Adrenal gland (tissue), 19 donors: ENCODE measurements at regions of chr10 and their contacts with region 1.

Region 1: DNA sequence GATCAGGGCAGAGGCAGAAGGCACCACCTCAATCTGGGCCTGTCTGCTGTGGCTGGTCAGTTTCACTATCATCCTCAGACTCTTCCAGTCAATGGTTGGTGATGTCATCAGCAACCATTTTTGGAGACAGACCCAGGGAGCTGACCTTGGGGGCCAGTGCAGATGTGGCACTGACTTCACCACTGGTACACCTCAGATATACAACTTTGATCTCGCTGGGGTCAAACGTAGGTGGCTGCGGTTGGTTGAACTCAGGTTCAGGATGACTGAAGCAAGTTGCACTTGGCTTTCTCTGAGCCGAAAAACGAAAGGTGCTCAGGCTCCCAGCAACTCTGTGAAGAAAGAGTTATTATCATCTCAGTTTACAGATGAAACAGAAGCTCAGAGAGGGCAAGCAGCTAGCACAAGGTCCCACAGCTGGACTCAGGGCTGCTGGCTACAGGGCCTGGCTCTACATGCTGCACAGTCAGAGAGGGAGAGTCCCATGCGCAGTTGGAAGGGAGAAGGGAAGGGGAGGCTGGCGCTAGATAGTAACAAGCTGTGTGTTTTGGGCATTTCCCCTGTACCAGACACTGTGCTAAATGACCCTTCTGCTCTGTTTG is 27.2 kb downstream of the ANKRD16 start:
- DNase-seq: peak in 4 of 7 donors; percentile 18 to 42 (median 26)
- H3K4me3 ChIP-seq: no peak overlapping the region
- H3K27ac ChIP-seq: peak overlapping the region in 2 of 5 donors; percentile 64 to 66
- H3K4me1 ChIP-seq: peaks cover 0 to 9% of the 10 kb centered on the region in 2 donors
- H3K27me3 ChIP-seq: no peaks in the 10 kb centered on the region
- CTCF ChIP-seq: no peak
- POLR2A ChIP-seq: no peak

Region 2: DNA sequence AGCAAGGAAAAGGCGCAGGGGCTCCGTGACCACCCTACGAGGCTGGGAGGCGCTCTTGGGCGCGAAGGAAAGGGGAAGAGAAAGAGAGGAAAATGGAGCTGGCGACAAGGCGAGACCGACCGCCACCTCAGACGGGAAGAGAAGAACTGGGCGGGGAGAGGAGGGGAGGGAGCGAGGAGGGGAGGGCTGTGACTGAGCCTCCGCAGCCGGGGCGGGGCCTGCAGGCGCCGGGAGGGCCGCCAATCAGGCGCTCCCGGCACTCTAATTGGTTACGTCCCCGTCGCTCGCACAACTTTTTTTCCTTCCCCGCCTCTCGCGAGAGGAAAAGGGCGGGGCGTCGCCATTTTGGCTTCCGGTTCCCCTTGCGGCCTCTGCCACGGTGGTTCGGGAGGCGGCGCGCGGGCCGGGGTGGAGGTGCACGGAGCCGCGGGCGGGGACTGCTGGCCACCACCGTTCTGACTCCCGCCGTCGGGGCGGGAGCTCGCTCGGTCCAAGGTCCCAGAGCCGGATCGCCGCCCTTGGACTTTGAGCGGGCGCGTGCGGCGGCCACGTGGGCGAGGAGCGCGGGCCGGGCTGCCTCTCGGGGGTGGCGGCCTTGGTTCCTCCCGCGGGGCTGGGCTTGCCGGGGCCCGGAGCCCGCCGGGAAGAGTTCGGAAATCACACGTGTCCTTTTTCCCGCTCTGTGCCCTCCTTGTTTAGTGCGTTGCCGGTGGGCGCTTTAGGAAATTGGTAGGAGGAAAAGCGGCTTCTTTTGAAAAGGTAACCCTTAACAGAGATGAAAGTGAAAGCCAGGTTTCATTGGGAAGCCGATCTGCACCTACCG is 49.0 kb before region 1 on chr10 and contains the start of gene GDI2:
- intact Hi-C with region 1: loop called in 1 of 2 experiments (anchors 10 kb)
- DNase-seq: peak; percentile 96 to 98 (median 97)
- H3K4me3 ChIP-seq: peak within 1 kb of the TSS; percentile 83 to 99 (median 98)
- H3K27ac ChIP-seq: peak within 1 kb of the TSS; percentile 94 to 99 (median 97)
- H3K4me1 ChIP-seq: peaks cover 23 to 49% of the 10 kb centered on the region in 2 donors
- H3K27me3 ChIP-seq: no peaks in the 10 kb centered on the region
- CTCF ChIP-seq: peak in 1 of 6 experiments; percentile 18
- POLR2A ChIP-seq: peak; percentile 84 to 97
- total RNA-seq, gene GDI2: 182 to 412 (median 239) TPM

Region 3: DNA sequence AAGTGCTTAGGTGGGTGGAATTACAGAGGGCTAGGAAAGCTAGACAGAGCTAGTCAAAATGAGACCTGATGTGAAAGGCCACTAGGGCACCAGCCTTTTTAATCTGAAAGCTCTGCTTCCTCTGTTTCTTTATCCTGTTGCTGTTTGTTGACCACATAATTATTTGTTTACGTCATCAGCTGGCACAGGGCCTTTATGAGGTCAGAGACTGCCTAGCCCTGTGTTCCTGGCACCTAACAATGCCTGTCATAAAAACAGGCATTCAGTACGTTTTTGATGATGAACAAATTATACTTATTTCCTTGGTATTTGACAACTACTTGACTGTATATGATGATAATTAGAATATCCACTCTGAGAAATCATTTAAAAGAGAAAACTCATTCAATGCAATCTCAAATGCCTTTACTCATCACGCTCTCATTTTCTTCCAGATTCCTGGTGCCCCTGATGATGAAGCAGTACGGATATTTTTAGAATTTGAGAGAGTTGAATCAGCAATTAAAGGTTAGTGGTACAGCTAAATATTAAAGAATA is 252.4 kb after region 1 on chr10:
- intact Hi-C with region 1: no loop called
- DNase-seq: peak; percentile 54 to 85 (median 70)
- H3K4me3 ChIP-seq: no peak overlapping the region
- H3K27ac ChIP-seq: peak overlapping the region; percentile 11 to 84 (median 61)
- H3K4me1 ChIP-seq: peaks cover 0 to 18% of the 10 kb centered on the region in 2 donors
- H3K27me3 ChIP-seq: no peaks in the 10 kb centered on the region
- CTCF ChIP-seq: peak in 4 of 6 experiments; percentile 9 to 36 (median 18)
- POLR2A ChIP-seq: no peak